Colonic mucosa (tissue), 4 donors: ENCODE measurements at regions of chr9 and their contacts with region 1.

Region 1: DNA sequence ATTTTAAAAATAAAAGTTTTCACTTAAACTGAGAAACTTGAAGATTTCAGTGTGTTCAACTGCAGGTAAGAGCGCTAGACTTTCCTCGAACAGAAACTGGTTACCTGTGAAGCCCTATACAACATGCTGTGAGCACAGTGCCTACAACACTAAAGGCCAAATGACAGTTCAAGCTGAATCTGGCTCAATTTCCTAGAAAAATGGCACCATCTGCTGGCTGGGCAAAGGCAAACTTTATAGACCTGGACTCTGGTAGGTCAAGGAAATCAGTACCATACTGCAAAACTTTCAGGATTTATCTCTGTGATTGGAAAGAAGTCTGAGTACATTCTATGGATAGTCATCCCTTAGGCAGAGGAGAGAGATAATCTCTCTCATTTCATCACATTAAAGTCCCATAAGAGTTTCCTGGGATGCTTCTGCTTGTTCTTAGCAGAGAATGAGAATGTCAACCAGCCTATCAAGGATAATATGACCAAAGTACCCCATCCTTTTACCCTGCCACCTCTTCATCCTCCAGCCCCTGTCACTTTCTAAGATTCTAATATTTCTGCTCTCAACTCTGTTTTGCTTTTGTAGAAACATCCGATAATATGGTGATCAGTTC is 31.8 kb upstream of the FOXB2 start:
- DNase-seq: peak; percentile 52
- H3K4me3 ChIP-seq: no peak overlapping the region
- H3K27ac ChIP-seq: no peak overlapping the region
- H3K4me1 ChIP-seq: no peaks in the 10 kb centered on the region
- H3K27me3 ChIP-seq: no peaks in the 10 kb centered on the region
- CTCF ChIP-seq: peak; percentile 54

Region 2: GRCh38 chr9:76756268-76756640 is 231.4 kb before region 1 on chr9:
- intact Hi-C with region 1: loop called (anchors 5 kb)
- DNase-seq: peak; percentile 57
- H3K4me3 ChIP-seq: no peak overlapping the region
- H3K27ac ChIP-seq: no peak overlapping the region
- H3K4me1 ChIP-seq: no peaks in the 10 kb centered on the region
- H3K27me3 ChIP-seq: no peaks in the 10 kb centered on the region
- CTCF ChIP-seq: no peak

Region 3: DNA sequence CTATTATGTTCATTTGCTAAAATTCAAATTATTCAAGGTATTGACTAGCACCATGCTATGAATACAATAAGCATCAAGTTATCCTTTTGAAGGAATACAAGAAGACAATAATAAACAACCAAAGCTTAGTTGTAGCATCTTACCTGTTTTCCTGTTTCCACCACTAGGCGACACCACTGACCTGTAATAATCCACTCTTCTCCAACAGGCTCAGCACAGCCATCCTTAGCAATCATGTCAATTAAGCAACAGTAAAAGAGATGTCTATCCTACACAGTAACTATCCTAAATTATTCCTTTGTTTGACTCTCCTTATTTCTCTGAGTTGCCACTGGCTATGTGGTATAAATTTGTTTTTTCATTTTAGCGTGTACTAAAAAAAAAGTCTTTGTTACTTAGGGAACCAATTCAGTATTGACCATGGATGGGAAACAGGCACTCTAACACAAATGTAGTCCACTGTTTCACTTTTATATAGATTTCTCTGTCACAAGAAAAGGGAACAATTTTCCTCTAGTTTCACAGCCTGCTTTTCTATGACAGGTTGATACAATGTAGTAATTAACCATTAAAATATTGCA is 177.2 kb before region 1 on chr9:
- intact Hi-C with region 1: loop called (anchors 5 kb)
- DNase-seq: peak; percentile 61
- H3K4me3 ChIP-seq: no peak overlapping the region
- H3K27ac ChIP-seq: no peak overlapping the region
- H3K4me1 ChIP-seq: no peaks in the 10 kb centered on the region
- H3K27me3 ChIP-seq: no peaks in the 10 kb centered on the region
- CTCF ChIP-seq: peak; percentile 50